Common myeloid progenitor, CD34-positive (primary cell): ENCODE measurements at regions of chr22 and their contacts with region 1.

Region 1: DNA sequence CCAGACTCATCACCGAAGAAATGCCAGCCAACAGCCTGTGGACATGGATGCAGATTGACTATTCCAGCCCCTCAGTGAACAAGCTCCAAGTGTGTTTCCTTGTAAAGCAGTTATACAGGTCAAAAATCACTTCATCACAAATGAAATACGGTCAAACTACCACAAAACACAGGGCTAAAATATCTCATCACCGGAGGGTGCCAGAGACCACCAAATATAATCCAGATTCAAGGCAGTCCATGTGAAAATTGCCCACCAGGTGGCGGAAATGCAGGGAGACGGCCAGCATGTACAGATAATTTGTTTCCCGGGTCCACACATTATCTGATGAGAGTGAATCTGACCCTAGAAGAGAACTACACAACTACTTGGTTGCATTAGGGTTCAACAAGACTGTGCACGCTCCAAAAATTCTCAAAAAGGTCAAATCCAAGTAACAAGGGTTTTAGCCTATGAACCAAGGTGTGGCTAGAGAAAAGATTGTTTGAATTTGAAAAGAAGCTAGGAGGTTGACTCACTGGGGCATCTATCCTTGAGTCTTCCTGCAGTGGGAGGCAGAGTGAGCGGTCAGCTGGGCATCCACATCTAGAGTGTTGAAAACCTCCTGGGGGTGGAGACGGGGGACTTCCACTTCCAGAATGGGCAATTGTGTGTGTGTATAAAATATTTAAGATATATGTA is 71.7 kb downstream of the IGLL5 start:
- DNase-seq: peak; percentile 86 to 90 (median 86)
- H3K4me3 ChIP-seq: no peak overlapping the region
- H3K27ac ChIP-seq: no peak overlapping the region
- H3K4me1 ChIP-seq: peaks cover 4 to 9% (median 8%) of the 10 kb centered on the region in 4 experiments
- H3K27me3 ChIP-seq: peaks cover 0 to 5% (median 0%) of the 10 kb centered on the region in 5 experiments

Region 2: DNA sequence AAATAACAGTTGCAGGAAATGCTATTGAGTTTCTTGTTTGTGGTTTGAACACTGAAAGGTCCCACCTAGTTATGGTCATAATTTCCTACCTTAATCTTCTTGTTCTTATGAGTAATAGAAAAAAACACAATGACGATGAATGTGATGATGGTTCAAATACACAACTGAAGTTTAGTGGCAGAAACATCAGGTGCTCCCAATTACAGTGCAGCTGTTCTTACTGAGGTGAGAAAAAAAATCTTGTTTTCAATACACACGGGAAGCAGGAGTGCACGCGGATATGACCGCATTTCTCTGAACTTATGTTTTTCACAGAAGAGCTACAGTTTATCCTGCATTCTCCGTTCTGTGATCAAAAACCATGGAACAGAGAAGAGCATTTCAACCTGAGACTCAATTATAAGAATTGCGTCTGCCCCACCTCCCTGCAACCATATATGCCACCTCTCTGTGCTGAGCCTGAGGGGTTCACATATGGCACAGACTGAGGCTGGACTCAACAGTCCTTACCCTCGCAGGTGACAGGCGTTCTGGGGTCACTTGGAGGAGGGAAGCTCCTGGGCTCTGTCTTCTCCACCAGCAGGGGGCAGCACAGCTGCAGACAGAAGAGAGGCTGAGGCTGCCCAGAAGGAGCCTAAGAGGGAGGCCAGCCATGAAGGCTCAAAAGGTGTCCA is 171.4 kb before region 1 on chr22:
- CTCF ChIA-PET with region 1: interaction called, 53 read pairs
- POLR2A ChIA-PET with region 1: no interaction called
- DNase-seq: peak; percentile 55 to 75 (median 69)
- H3K4me3 ChIP-seq: no peak overlapping the region
- H3K27ac ChIP-seq: no peak overlapping the region
- H3K4me1 ChIP-seq: peaks cover 0 to 3% (median 0%) of the 10 kb centered on the region in 4 experiments
- H3K27me3 ChIP-seq: peaks cover 0 to 1% (median 0%) of the 10 kb centered on the region in 5 experiments

Region 3: DNA sequence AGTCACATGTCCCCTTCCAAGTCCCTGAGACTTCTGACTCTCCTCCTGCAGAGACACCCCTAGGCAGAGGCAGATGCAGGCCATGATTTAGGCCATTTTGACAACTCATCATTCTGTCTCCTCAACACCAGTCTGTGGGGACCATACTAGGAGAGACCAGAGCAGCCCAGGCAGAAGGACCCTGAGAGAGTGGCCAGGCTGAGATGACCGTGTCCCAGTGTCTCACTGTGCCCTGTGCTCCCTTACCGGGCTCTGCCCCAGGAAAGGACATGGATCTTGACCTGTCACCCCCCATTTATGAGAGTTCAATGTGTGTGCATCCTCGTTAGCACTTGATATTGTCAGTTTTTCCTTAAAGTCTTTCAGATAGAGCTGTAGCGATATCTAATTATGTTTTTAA is 124.0 kb before region 1 on chr22:
- CTCF ChIA-PET with region 1: no interaction called
- POLR2A ChIA-PET with region 1: no interaction called
- DNase-seq: no peak
- H3K4me3 ChIP-seq: no peak overlapping the region
- H3K27ac ChIP-seq: no peak overlapping the region
- H3K4me1 ChIP-seq: peaks cover 3 to 36% (median 10%) of the 10 kb centered on the region in 4 experiments
- H3K27me3 ChIP-seq: no peaks in the 10 kb centered on the region

Region 4: DNA sequence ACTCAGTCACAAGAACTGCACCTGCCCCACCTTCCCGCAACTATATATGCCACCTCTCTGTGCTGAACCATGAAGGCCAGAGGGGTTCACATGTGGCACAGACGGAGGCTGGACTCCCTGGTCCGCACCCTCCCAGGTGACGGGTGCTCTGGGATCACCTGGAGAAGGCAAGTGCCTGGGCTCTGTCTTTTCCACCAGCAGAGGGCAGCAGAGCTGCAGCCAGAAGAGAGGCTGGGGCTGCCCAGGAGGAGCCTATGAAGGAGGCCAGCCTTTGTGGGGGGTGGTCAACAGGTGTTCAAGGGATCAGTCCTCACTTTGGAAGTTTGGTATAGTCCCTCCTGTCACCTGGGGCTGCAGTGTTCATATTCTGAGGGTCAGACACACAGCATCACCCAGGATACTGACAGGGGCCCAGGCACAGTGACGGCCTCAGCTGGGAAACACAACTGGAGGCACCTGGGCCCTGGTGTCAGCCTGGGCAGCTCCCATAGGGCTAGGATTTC is 110.9 kb before region 1 on chr22:
- CTCF ChIA-PET with region 1: interaction called, 61 read pairs
- POLR2A ChIA-PET with region 1: interaction called, 3 read pairs
- DNase-seq: peak; percentile 48 to 66 (median 52)
- H3K4me3 ChIP-seq: no peak overlapping the region
- H3K27ac ChIP-seq: no peak overlapping the region
- H3K4me1 ChIP-seq: peaks cover 0 to 4% (median 1%) of the 10 kb centered on the region in 4 experiments
- H3K27me3 ChIP-seq: peaks cover 0 to 11% (median 4%) of the 10 kb centered on the region in 5 experiments

Region 5: GRCh38 chr22:22935546-22936157 is 23.6 kb before region 1 on chr22:
- CTCF ChIA-PET with region 1: interaction called, 107 read pairs
- POLR2A ChIA-PET with region 1: no interaction called
- DNase-seq: peak; percentile 39 to 61 (median 47)
- H3K4me3 ChIP-seq: no peak overlapping the region
- H3K27ac ChIP-seq: peak overlapping the region in 1 of 2 experiments; percentile 34
- H3K4me1 ChIP-seq: peaks cover 0 to 35% (median 3%) of the 10 kb centered on the region in 4 experiments
- H3K27me3 ChIP-seq: no peaks in the 10 kb centered on the region

Region 6: GRCh38 chr22:23128269-23129108 is 169.2 kb after region 1 on chr22:
- CTCF ChIA-PET with region 1: interaction called, 470 read pairs
- POLR2A ChIA-PET with region 1: interaction called, 3 read pairs
- DNase-seq: peak; percentile 73 to 87 (median 80)
- H3K4me3 ChIP-seq: no peak overlapping the region
- H3K27ac ChIP-seq: no peak overlapping the region
- H3K4me1 ChIP-seq: peaks cover 0 to 3% (median 0%) of the 10 kb centered on the region in 4 experiments
- H3K27me3 ChIP-seq: no peaks in the 10 kb centered on the region

Region 7: GRCh38 chr22:23289851-23290724 is 330.8 kb after region 1 on chr22:
- CTCF ChIA-PET with region 1: interaction called, 21 read pairs
- POLR2A ChIA-PET with region 1: no interaction called
- DNase-seq: peak; percentile 66 to 81 (median 79)
- H3K4me3 ChIP-seq: no peak overlapping the region
- H3K27ac ChIP-seq: no peak overlapping the region
- H3K4me1 ChIP-seq: no peaks in the 10 kb centered on the region
- H3K27me3 ChIP-seq: no peaks in the 10 kb centered on the region